WTC11 (cell line): ENCODE measurements at regions of chr1 and their contacts with region 1.

Region 1: GRCh38 chr1:1399187-1399871 is at the start of gene CCNL2:
- DNase-seq: peak; percentile 99
- ATAC-seq: peak; percentile 94
- H3K4me3 Mint-ChIP-seq: peak within 1 kb of the TSS; percentile 85
- H3K27ac Mint-ChIP-seq: peak within 1 kb of the TSS; percentile 93
- H3K4me1 Mint-ChIP-seq: peaks cover 31% of the 10 kb centered on the region
- H3K27me3 Mint-ChIP-seq: no peaks in the 10 kb centered on the region
- CTCF ChIP-seq: no peak
- total RNA-seq, gene CCNL2: 117 to 142 TPM (median 117 TPM) in 3 replicates

Region 2: GRCh38 chr1:1324521-1325287 is 74.6 kb before region 1 on chr1 and contains the starts of genes CPTP and INTS11:
- CTCF ChIA-PET with region 1: no interaction called
- POLR2A ChIA-PET with region 1: no interaction called
- DNase-seq: peak; percentile 95
- ATAC-seq: peak; percentile 86
- H3K4me3 Mint-ChIP-seq: peak within 1 kb of the TSS; percentile 87
- H3K27ac Mint-ChIP-seq: peak within 1 kb of the TSS; percentile 86
- H3K4me1 Mint-ChIP-seq: peaks cover 11% of the 10 kb centered on the region
- H3K27me3 Mint-ChIP-seq: no peaks in the 10 kb centered on the region
- CTCF ChIP-seq: no peak
- total RNA-seq, gene CPTP: 10.3 to 14.4 TPM (median 12.3 TPM) in 3 replicates
- total RNA-seq, gene INTS11: 144 to 170 TPM (median 160 TPM) in 3 replicates

Region 3: DNA sequence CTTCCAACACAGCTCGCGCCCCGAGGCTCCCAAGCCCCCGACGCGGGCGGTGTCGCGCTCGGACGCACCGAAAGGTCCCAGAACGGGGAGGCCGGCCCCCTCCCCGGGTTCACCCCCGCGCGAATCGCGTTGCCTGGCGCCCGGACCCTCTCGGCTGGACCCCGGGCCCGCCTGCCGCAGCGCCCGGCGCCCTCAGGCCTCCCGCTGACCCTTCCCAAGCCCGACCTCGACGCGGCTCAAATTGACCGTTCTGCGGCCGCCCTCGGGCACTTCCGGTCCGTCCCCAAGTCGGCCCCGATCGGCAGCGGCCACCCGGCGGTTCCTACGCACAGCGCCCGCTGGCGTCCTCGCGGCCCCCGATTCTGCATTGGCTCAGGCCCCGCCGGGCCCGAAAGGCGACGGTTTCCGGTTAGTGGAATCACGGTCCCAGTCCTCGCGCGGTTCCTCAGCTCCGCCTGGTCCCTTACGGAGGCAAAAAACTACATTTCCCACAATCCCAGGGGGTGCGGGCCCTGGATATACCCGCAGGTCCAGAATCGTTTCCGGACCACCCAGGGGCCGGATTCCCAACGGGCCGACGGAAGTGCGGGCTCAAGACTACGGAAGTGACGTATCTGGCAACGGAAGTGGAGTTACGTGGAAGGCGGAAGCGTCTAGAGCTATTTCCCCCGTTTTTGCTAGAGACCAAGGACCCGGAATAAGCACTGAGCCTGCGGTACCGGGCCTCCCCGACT is 24.2 kb before region 1 on chr1 and contains the start of gene AURKAIP1:
- CTCF ChIA-PET with region 1: interaction called, 12 read pairs
- POLR2A ChIA-PET with region 1: interaction called, 12 read pairs
- DNase-seq: peak; percentile 98
- ATAC-seq: peak; percentile 91
- H3K4me3 Mint-ChIP-seq: peak within 1 kb of the TSS; percentile 82
- H3K27ac Mint-ChIP-seq: peak within 1 kb of the TSS; percentile 87
- H3K4me1 Mint-ChIP-seq: peaks cover 3% of the 10 kb centered on the region; the same call in 1 of the 2 replicates
- H3K27me3 Mint-ChIP-seq: no peaks in the 10 kb centered on the region
- CTCF ChIP-seq: no peak
- total RNA-seq, gene AURKAIP1: 238 to 268 TPM (median 250 TPM) in 3 replicates

Region 4: DNA sequence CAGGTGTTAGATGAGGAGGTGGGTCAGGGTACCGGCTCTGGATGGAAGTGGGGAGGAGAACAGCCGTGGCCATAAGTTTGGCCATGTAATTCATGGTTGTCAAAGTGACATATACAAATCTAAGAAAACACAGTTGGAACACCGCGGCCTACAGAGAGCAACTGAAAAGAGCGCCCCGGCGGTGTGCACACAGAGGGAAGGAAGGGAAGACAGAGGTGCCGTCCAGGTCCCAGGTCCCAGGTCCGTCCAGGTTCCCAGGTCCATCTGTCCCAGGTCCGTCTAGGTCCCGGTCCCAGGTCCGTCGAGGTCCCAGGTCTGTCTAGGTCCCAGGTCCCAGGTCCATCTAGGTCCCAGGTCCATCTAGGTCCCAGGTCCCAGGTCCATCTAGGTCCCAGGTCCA is 12.3 kb after region 1 on chr1:
- CTCF ChIA-PET with region 1: interaction called, 11 read pairs
- POLR2A ChIA-PET with region 1: interaction called, 6 read pairs
- DNase-seq: no peak
- ATAC-seq: no peak
- H3K4me3 Mint-ChIP-seq: no peak overlapping the region
- H3K27ac Mint-ChIP-seq: peak overlapping the region; percentile 77
- H3K4me1 Mint-ChIP-seq: peaks cover 37% of the 10 kb centered on the region
- H3K27me3 Mint-ChIP-seq: peaks cover 4% of the 10 kb centered on the region; the same call in 1 of the 2 replicates
- CTCF ChIP-seq: no peak

Region 5: DNA sequence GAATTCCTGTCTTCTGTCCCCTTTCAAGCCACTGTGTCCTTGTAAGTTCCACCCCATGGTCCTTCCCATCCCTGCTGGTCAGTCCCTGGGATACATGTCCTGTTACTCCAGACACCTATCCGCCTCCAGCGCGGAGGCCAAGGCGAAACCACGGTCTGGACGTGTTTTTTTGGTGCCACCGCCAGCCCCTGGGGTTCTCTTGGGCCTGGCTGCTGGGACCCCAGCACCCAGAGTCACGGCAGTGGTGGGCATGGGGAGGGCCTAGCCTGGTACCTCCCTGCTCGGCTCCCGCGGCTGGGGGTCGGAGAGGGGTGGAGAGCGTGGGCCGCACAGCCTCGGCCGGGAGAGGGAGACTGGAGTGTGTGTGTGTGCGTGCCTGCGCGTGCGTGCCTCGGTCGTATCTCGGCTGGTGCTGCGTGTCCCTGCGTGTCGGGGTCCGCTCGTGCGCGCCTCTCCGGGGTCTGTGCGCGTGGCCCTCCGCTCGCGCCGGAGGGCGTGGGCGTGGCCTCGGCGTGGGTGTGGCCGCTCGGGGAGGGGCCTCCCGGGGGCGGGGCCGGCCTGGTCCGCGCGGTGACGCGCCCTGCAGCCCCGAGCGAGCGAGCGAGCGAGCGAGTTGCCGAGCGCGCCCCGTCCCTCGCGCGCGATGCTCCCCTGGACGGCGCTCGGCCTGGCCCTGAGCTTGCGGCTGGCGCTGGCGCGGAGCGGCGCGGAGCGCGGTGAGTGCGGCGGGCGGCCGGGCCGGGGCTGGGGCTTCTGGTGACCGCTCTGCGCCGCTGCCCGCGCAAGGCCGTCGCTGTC is 36.0 kb after region 1 on chr1 and contains the start of gene VWA1:
- CTCF ChIA-PET with region 1: interaction called, 12 read pairs
- POLR2A ChIA-PET with region 1: interaction called, 7 read pairs
- DNase-seq: peak; percentile 69
- ATAC-seq: peak; percentile 41
- H3K4me3 Mint-ChIP-seq: peak within 1 kb of the TSS; percentile 71
- H3K27ac Mint-ChIP-seq: peak within 1 kb of the TSS; percentile 84; the same call in 1 of the 2 replicates
- H3K4me1 Mint-ChIP-seq: peaks cover 22% of the 10 kb centered on the region
- H3K27me3 Mint-ChIP-seq: peaks cover 6% of the 10 kb centered on the region; the same call in 1 of the 2 replicates
- CTCF ChIP-seq: no peak
- total RNA-seq, gene VWA1: 28.3 to 35.5 TPM (median 28.3 TPM) in 3 replicates

Region 6: GRCh38 chr1:1489231-1489630 is 89.9 kb after region 1 on chr1:
- CTCF ChIA-PET with region 1: no interaction called
- POLR2A ChIA-PET with region 1: no interaction called
- DNase-seq: no peak
- ATAC-seq: no peak
- H3K4me3 Mint-ChIP-seq: no peak overlapping the region
- H3K27ac Mint-ChIP-seq: no peak overlapping the region
- H3K4me1 Mint-ChIP-seq: no peaks in the 10 kb centered on the region
- H3K27me3 Mint-ChIP-seq: no peaks in the 10 kb centered on the region
- CTCF ChIP-seq: no peak

Region 7: GRCh38 chr1:1507305-1507704 is 108.0 kb after region 1 on chr1:
- CTCF ChIA-PET with region 1: interaction called, 14 read pairs
- POLR2A ChIA-PET with region 1: no interaction called
- DNase-seq: no peak
- ATAC-seq: no peak
- H3K4me3 Mint-ChIP-seq: no peak overlapping the region
- H3K27ac Mint-ChIP-seq: no peak overlapping the region
- H3K4me1 Mint-ChIP-seq: peaks cover 7% of the 10 kb centered on the region
- H3K27me3 Mint-ChIP-seq: no peaks in the 10 kb centered on the region
- CTCF ChIP-seq: no peak

Region 8: GRCh38 chr1:1567891-1568291 is 168.6 kb after region 1 on chr1:
- CTCF ChIA-PET with region 1: no interaction called
- POLR2A ChIA-PET with region 1: no interaction called
- DNase-seq: no peak
- ATAC-seq: no peak
- H3K4me3 Mint-ChIP-seq: no peak overlapping the region
- H3K27ac Mint-ChIP-seq: peak overlapping the region; percentile 91
- H3K4me1 Mint-ChIP-seq: no peaks in the 10 kb centered on the region
- H3K27me3 Mint-ChIP-seq: no peaks in the 10 kb centered on the region
- CTCF ChIP-seq: no peak